HepG2 (cell line): ENCODE measurements at regions of chr6 and their contacts with region 1.

Region 1: GRCh38 chr6:23633986-23634385 is 492.0 kb upstream of the NRSN1 start:
- DNase-seq: no peak
- ATAC-seq: no peak
- H3K4me3 ChIP-seq: no peak overlapping the region
- H3K27ac ChIP-seq: no peak overlapping the region
- H3K4me1 ChIP-seq: no peaks in the 10 kb centered on the region
- H3K27me3 ChIP-seq: no peaks in the 10 kb centered on the region
- CTCF ChIP-seq: no peak
- EP300 ChIP-seq: no peak
- POLR2A ChIP-seq: no peak
- RAD21 ChIP-seq: no peak

Region 2: DNA sequence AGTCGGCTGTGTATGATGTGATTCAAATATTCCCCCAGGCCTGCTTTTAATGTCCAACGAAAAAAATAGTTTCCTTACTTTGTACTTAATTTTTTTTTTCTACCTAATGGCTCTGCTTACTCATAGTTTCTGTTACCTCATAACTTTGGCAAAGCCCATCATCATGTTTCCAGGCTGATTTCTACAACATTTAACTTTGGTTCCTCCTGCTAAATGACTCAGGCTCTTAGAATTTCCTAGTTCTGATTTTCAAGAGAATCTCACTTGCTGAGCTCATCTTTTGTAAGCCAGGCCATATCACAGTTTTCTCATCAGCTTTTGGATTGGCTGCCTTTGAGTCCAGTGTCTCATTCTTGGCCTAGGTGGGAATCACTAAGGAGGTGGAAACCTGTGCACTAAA is 741.5 kb before region 1 on chr6:
- CTCF ChIA-PET with region 1: no interaction called
- POLR2A ChIA-PET with region 1: no interaction called
- in situ Hi-C with region 1: no loop called
- intact Hi-C with region 1: loop called (anchors 5 kb)
- DNase-seq: no peak
- ATAC-seq: no peak
- H3K4me3 ChIP-seq: no peak overlapping the region
- H3K27ac ChIP-seq: no peak overlapping the region
- H3K4me1 ChIP-seq: no peaks in the 10 kb centered on the region
- H3K27me3 ChIP-seq: no peaks in the 10 kb centered on the region
- CTCF ChIP-seq: no peak
- EP300 ChIP-seq: no peak
- POLR2A ChIP-seq: no peak
- RAD21 ChIP-seq: no peak